HepG2 (cell line): ENCODE measurements at regions of chr11 and their contacts with region 1.

Region 1: DNA sequence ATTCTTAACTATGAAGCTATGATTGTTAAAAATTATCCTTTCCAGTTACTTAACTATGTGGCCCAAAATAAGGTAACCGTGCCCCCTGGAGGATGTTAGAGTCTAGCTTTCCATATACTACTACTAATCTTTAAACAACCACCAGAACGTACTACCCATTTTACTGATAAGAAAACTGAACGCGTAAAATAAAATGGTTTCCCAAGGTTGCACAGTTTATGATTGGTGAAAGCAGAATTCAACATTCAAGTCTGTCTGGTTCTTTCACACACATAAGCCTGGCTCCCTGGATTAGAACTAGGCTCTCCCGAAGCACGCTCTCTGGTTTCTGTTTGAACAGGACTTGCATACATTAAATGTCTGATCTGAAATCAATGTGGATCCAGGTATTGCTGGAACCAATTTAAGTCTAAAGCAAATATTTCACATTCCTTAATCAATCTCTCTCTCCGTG is 437.9 kb upstream of the CCDC90B start:
- DNase-seq: peak; percentile 51
- ATAC-seq: peak; percentile 88
- H3K4me3 ChIP-seq: peak overlapping the region; percentile 4 to 35 (median 25); a peak in 1 of 6 replicates
- H3K27ac ChIP-seq: no peak overlapping the region
- H3K4me1 ChIP-seq: peaks cover 14% of the 10 kb centered on the region
- H3K27me3 ChIP-seq: 0 out of 5 replicates have a peak, but pooled peaks cover 0 to 3% of the 10 kb centered on the region in 2 experiments
- CTCF ChIP-seq: peak; percentile 66
- EP300 ChIP-seq: no peak
- POLR2A ChIP-seq: no peak
- RAD21 ChIP-seq: 0 out of 2 replicates have a peak, but pooled peaks have one; percentile 18

Region 2: GRCh38 chr11:83241291-83241946 is 482.6 kb before region 1 on chr11:
- CTCF ChIA-PET with region 1: no interaction called
- POLR2A ChIA-PET with region 1: no interaction called
- in situ Hi-C with region 1: no loop called
- intact Hi-C with region 1: loop called (anchors 1 kb)
- DNase-seq: peak; percentile 63
- ATAC-seq: peak; percentile 96
- H3K4me3 ChIP-seq: no peak overlapping the region
- H3K27ac ChIP-seq: no peak overlapping the region
- H3K4me1 ChIP-seq: no peaks in the 10 kb centered on the region
- H3K27me3 ChIP-seq: no peaks in the 10 kb centered on the region
- CTCF ChIP-seq: peak; percentile 82
- EP300 ChIP-seq: no peak
- POLR2A ChIP-seq: no peak
- RAD21 ChIP-seq: 0 out of 2 replicates have a peak, but pooled peaks have one; percentile 38

Region 3: DNA sequence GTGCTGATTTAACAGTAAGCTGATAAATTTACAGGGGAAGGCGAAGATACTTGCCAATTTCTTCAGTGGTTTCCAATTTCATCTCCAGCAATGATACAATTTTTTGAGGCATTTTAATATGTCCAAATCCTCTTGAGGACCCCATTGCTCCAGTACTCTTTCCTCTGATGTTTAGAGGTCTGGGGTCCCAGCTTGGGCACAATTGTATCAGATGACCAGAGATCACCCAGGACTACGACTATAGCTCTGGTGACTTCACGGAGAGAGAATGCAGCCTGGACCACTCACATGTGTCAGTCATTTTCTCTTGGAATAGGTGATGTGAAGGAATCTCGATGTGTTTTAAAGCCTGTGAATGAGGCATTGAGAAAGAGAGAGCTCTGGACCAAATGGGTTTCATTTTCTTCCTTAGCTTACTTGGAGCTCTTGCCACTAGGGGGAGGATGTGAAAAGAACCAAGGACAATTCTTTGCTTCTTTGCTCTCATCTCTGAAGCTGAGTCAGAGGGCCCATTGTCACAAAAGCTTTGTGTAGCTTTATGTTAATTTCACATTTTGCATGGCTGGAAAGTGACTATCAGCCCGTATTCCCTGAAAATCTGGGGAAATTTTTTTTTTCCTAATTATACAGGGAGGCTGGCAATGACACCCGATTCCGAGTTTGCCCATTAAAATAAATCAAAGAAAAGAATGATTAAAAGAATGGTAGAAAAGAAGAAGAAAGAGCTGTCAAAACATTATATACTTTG is 431.2 kb before region 1 on chr11:
- CTCF ChIA-PET with region 1: interaction called, 8 read pairs
- POLR2A ChIA-PET with region 1: no interaction called
- in situ Hi-C with region 1: loop called (anchors 10 kb)
- intact Hi-C with region 1: loop called (anchors 1 kb)
- DNase-seq: peak; percentile 57
- ATAC-seq: peak; percentile 87
- H3K4me3 ChIP-seq: no peak overlapping the region
- H3K27ac ChIP-seq: no peak overlapping the region
- H3K4me1 ChIP-seq: no peaks in the 10 kb centered on the region
- H3K27me3 ChIP-seq: no peaks in the 10 kb centered on the region
- CTCF ChIP-seq: peak; percentile 71
- EP300 ChIP-seq: no peak
- POLR2A ChIP-seq: no peak
- RAD21 ChIP-seq: no peak

Region 4: GRCh38 chr11:83521647-83522596 is 202.1 kb before region 1 on chr11:
- CTCF ChIA-PET with region 1: no interaction called
- POLR2A ChIA-PET with region 1: no interaction called
- in situ Hi-C with region 1: no loop called
- intact Hi-C with region 1: loop called (anchors 1 kb)
- DNase-seq: peak; percentile 15
- ATAC-seq: peak; percentile 83
- H3K4me3 ChIP-seq: no peak overlapping the region
- H3K27ac ChIP-seq: no peak overlapping the region
- H3K4me1 ChIP-seq: peaks cover 17% of the 10 kb centered on the region
- H3K27me3 ChIP-seq: no peaks in the 10 kb centered on the region
- CTCF ChIP-seq: peak; percentile 53
- EP300 ChIP-seq: no peak
- POLR2A ChIP-seq: no peak
- RAD21 ChIP-seq: no peak

Region 5: DNA sequence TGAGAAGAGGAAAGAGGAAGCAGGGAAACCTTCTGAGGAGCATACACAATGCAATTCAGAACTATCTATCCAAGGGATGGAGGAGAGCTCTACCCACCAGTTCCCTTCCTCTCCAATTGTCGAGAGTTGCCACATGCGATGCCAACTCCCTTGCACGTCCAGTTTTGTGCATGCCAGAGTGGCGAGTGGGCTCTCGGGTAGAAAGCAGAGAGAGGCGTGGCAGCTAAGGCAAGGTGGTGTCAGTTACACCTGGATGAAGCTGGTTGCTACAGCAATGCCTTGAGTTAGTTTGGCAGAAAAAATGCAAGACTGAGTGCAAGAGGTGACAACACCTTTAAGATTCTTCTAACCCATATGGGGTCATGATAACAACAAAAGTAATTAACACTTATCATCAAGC is 17.5 kb before region 1 on chr11:
- CTCF ChIA-PET with region 1: no interaction called
- POLR2A ChIA-PET with region 1: no interaction called
- in situ Hi-C with region 1: no loop called
- intact Hi-C with region 1: no loop called
- DNase-seq: no peak
- ATAC-seq: no peak
- H3K4me3 ChIP-seq: no peak overlapping the region
- H3K27ac ChIP-seq: no peak overlapping the region
- H3K4me1 ChIP-seq: peaks cover 7% of the 10 kb centered on the region; the same call in 1 of the 2 replicates
- H3K27me3 ChIP-seq: no peaks in the 10 kb centered on the region
- CTCF ChIP-seq: no peak
- EP300 ChIP-seq: no peak
- POLR2A ChIP-seq: no peak
- RAD21 ChIP-seq: no peak